Mucosa of descending colon (tissue), 3 donors: ENCODE measurements at regions of chr19 and their contacts with region 1.

Region 1: DNA sequence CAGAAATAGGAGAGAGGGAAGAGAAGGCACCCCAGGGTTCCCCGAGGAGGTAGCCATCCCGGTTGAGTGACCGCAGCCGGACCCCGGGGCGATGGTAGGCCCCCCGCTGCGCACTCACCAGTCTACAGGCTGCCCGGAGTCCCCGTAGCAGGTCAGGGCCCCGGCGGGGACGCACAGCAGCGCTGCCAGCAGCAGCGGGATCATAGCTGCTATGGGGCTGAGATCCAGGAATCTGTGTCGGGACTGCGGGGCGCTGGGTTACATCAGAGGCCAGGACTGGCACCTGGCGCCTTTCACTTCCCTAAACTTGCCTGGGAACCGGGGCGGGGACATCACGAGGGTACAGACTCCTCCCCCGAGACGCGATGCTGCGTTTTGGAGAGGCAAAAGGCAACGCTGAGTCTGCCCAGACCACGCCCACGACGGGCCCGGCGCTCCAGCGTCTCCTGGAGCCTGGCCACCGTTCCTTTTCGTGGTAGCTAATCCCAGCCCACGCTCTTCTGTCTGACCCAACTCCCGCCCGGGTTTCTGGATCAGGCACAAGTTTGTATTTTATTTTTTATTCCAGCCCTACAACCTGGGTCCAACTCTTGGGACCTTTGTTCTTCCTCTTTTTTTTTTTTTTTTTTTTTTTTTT is at the start of gene DNASE2:
- DNase-seq: peak; percentile 95 to 98 (median 96)
- ATAC-seq: peak; percentile 84
- H3K4me3 ChIP-seq: peak within 1 kb of the TSS; percentile 63
- H3K4me1 ChIP-seq: peaks cover 18% of the 10 kb centered on the region
- CTCF ChIP-seq: no peak
- total RNA-seq, gene DNASE2: 22.8 to 31.8 (median 30.3) TPM

Region 2: GRCh38 chr19:12815088-12815487 is 66.2 kb before region 1 on chr19:
- intact Hi-C with region 1: no loop called
- DNase-seq: no peak
- ATAC-seq: no peak
- H3K4me3 ChIP-seq: no peak overlapping the region
- H3K4me1 ChIP-seq: no peaks in the 10 kb centered on the region
- CTCF ChIP-seq: no peak

Region 3: DNA sequence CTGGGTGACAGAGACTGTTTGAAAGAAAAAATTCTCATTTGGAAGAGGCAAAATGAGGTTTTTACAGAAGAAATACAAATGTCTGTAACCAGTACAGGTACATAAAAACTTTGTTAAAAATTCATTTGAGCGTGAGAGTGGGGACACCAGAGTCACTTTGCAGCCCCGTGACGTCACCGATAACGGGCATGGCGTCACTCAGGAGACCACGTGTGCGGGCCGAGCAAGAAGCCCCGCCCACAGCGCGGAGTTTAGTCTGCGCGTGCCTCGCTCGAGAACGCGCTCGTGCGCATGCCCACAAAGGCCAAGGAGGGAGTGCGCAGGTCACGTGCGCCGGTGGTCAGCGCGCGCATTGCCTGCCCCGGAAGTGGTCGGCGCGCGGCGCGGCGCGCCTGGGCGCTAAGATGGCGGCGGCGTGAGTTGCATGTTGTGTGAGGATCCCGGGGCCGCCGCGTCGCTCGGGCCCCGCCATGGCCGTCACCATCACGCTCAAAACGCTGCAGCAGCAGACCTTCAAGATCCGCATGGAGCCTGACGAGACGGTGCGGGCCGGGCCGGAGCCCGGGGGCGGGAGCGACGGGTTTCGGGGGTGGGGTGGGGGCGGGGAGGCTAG is 64.3 kb after region 1 on chr19 and contains the start of gene RAD23A:
- intact Hi-C with region 1: loop called in 1 of 2 experiments (anchors 10 kb)
- DNase-seq: peak; percentile 99
- ATAC-seq: peak; percentile 96
- H3K4me3 ChIP-seq: peak within 1 kb of the TSS; percentile 80
- H3K4me1 ChIP-seq: peaks cover 20% of the 10 kb centered on the region
- CTCF ChIP-seq: no peak
- total RNA-seq, gene RAD23A: 76.4 to 117 (median 81.4) TPM